PC-3 (cell line): ENCODE measurements at regions of chr10 and their contacts with region 1.

Region 1: GRCh38 chr10:33155720-33156638 is 178.5 kb downstream of the NRP1 start:
- DNase-seq: peak; percentile 100
- ATAC-seq: peak; percentile 90
- H3K4me3 ChIP-seq: peak overlapping the region; percentile 15
- H3K27ac ChIP-seq: peak overlapping the region; percentile 65
- H3K4me1 ChIP-seq: peaks cover 36% of the 10 kb centered on the region
- H3K27me3 ChIP-seq: no peaks in the 10 kb centered on the region
- CTCF ChIP-seq: no peak

Region 2: DNA sequence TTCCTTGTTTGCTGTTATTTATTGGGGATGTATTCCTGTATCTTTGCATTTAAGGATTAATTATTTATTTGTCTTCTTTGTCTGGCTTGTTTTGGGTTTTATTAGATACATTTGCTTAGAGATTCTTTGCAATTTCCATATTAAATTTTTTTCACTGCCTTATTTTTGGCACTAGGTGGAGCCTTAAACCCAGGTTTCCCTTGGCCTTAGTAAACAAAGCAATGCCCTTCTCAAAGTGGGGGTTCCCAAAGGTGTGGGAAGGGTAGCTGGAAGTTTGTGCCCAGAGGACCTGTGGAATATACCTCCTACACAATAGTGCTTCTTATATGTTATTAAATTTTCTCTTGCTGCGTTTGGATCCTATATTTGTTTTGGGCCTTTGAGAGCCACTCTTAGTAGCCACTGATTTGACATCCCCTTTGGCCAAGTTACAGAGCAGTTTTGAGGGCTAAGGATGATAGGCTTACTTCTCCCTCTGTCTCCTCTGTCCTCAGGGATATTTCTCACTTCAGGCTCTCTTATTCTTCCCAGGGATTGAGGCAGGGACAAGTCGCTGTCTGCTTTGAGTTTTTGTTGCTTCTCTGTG is 360.3 kb before region 1 on chr10:
- CTCF ChIA-PET with region 1: no interaction called
- POLR2A ChIA-PET with region 1: no interaction called
- intact Hi-C with region 1: loop called (anchors 1 kb)
- DNase-seq: peak; percentile 73
- ATAC-seq: peak; percentile 73
- H3K4me3 ChIP-seq: no peak overlapping the region
- H3K27ac ChIP-seq: no peak overlapping the region
- H3K4me1 ChIP-seq: no peaks in the 10 kb centered on the region
- H3K27me3 ChIP-seq: no peaks in the 10 kb centered on the region
- CTCF ChIP-seq: peak; percentile 99

Region 3: DNA sequence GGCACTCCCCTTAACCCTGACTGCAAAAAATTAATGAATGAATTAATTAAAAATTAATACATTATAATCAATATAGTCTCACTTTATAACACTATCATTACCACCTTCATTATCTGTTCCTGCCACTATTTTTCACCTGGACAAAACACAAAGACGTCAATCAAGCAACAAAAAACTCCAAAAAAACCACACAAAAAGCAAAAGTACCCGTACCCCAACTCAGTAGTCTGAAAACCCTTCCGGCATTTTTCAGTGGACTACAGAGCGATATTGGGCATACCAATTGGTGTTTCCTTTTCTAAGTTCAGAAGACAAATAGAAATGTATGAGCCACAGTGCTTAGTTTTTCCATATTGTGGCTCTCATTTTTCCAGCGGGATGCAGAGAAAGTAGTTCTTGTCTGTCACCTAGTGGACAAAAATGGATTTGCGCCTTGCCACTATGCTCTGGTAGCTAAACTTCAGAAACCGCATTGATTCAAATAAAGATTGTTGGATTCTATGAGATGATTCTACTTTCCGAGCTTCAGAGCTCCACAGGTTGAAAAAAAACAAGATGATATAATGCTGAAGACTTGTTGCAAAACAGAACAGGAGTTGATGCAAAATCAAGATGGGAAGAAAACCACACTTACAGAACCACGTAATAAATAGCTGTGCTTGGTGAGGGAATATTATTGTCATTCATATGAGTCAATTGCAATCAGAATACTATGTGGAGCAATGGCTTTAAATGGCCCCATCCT is 147.3 kb before region 1 on chr10:
- CTCF ChIA-PET with region 1: interaction called, 21 read pairs
- POLR2A ChIA-PET with region 1: interaction called, 9 read pairs
- intact Hi-C with region 1: loop called (anchors 1 kb)
- DNase-seq: peak; percentile 100
- ATAC-seq: peak; percentile 12
- H3K4me3 ChIP-seq: peak overlapping the region; percentile 29
- H3K27ac ChIP-seq: peak overlapping the region; percentile 66
- H3K4me1 ChIP-seq: peaks cover 63% of the 10 kb centered on the region
- H3K27me3 ChIP-seq: no peaks in the 10 kb centered on the region
- CTCF ChIP-seq: peak; percentile 100

Region 4: GRCh38 chr10:33143160-33143728 is 12.7 kb before region 1 on chr10:
- CTCF ChIA-PET with region 1: interaction called, 15 read pairs
- POLR2A ChIA-PET with region 1: interaction called, 3 read pairs
- intact Hi-C with region 1: loop called (anchors 1 kb)
- DNase-seq: peak; percentile 100
- ATAC-seq: peak; percentile 97
- H3K4me3 ChIP-seq: no peak overlapping the region
- H3K27ac ChIP-seq: peak overlapping the region; percentile 34
- H3K4me1 ChIP-seq: peaks cover 15% of the 10 kb centered on the region
- H3K27me3 ChIP-seq: no peaks in the 10 kb centered on the region
- CTCF ChIP-seq: no peak

Region 5: GRCh38 chr10:33216661-33217427 is 60.9 kb after region 1 on chr10:
- CTCF ChIA-PET with region 1: interaction called, 8 read pairs
- POLR2A ChIA-PET with region 1: interaction called, 4 read pairs
- intact Hi-C with region 1: loop called (anchors 1 kb)
- DNase-seq: peak; percentile 100
- ATAC-seq: peak; percentile 91
- H3K4me3 ChIP-seq: peak overlapping the region; percentile 6; the same call in 1 of the 2 replicates
- H3K27ac ChIP-seq: peak overlapping the region; percentile 65
- H3K4me1 ChIP-seq: peaks cover 46% of the 10 kb centered on the region
- H3K27me3 ChIP-seq: no peaks in the 10 kb centered on the region
- CTCF ChIP-seq: no peak

Region 6: GRCh38 chr10:33258967-33259366 is 103.0 kb after region 1 on chr10:
- CTCF ChIA-PET with region 1: interaction called, 3 read pairs
- POLR2A ChIA-PET with region 1: interaction called, 3 read pairs
- intact Hi-C with region 1: loop called (anchors 1 kb)
- DNase-seq: peak; percentile 98
- ATAC-seq: peak; percentile 52
- H3K4me3 ChIP-seq: no peak overlapping the region
- H3K27ac ChIP-seq: peak overlapping the region; percentile 65
- H3K4me1 ChIP-seq: peaks cover 86% of the 10 kb centered on the region
- H3K27me3 ChIP-seq: no peaks in the 10 kb centered on the region
- CTCF ChIP-seq: no peak